Activated CD4-positive, alpha-beta T cell treated with anti-CD3 and anti-CD28 coated beads, Interleukin-2, amount 10 ng/mL, durations not matched to agents 24 days and 14 days (primary cell): ENCODE measurements at regions of chr16 and their contacts with region 1.

Region 1: GRCh38 chr16:30650369-30651123 is at the start of gene PRR14:
- DNase-seq: peak; percentile 99
- H3K4me3 Mint-ChIP-seq: peak within 1 kb of the TSS; percentile 95
- H3K27ac Mint-ChIP-seq: peak within 1 kb of the TSS; percentile 92
- H3K4me1 Mint-ChIP-seq: peaks cover 28% of the 10 kb centered on the region
- H3K27me3 Mint-ChIP-seq: peaks cover 2% of the 10 kb centered on the region
- total RNA-seq, gene PRR14: 82.2 and 86.7 TPM in 2 replicates

Region 2: DNA sequence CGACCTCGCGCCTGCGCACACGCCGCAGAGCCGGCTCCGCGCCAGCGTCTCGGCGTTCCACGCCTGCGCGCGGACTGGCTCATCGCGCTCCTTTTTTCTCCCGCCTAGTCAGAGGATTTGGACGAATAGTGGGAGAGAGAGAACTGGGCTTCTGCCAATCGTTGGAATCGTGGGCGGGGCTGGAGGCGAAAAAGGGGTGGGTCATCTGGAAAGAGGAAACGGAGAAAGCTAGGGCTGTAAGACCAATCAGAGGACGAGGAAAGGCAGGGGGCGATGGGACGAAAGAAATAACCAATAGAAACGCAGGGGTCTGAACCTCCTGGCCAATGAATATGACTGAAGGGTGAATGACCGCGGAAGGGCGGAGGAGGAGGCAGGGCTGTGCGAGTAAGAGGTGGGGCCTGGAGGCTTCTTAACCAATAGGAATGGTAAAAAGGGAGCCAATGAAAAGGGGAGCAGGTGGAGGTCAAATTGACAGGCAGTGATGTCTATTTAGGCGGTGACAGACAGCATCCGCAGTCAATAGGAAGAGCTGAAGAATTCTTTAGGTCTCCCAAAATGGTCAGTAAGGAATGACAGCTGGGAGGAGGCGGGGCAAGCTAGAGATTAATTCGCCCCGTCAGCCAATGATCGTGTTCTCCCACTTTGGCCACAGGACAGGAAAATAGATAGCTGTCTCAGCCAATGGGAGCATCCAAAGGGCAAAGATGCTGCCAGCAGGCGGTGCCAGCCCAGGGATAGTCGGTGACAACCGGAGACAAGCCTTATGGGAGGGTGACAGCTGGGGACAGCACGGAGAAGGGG is 279.9 kb before region 1 on chr16 and contains the start of gene TBC1D10B:
- intact Hi-C with region 1: loop called (anchors 2 kb)
- DNase-seq: peak; percentile 100
- H3K4me3 Mint-ChIP-seq: peak within 1 kb of the TSS; percentile 90
- H3K27ac Mint-ChIP-seq: peak within 1 kb of the TSS; percentile 94
- H3K4me1 Mint-ChIP-seq: peaks cover 42% of the 10 kb centered on the region
- H3K27me3 Mint-ChIP-seq: peaks cover 4% of the 10 kb centered on the region
- total RNA-seq, gene TBC1D10B: 68.9 TPM in 2 replicates

Region 3: GRCh38 chr16:30378236-30379204 is 272.0 kb before region 1 on chr16:
- intact Hi-C with region 1: loop called (anchors 2 kb)
- DNase-seq: peak; percentile 99
- H3K4me3 Mint-ChIP-seq: peak overlapping the region; percentile 99
- H3K27ac Mint-ChIP-seq: peak overlapping the region; percentile 100
- H3K4me1 Mint-ChIP-seq: peaks cover 43% of the 10 kb centered on the region
- H3K27me3 Mint-ChIP-seq: no peaks in the 10 kb centered on the region

Region 4: DNA sequence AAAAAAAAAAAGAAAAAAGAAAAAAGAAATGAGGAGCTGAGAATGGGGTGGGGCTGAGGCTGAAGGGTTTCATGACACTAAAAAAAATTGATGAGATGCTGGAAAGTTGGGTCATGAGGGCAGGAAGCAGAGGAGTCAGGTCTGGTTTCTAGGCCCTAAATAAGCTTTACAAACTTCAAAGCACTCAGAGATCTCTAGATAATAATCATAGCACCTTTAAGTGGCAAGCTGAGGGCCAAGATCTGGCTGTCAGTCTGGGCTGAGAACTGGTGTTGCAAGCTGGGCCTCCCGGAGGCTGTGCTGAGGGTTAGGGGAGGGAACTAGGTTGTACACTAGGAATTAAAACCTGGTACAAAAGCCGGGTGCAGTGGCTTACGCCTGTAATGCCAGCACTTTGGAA is 98.8 kb before region 1 on chr16:
- intact Hi-C with region 1: no loop called
- DNase-seq: peak; percentile 91
- H3K4me3 Mint-ChIP-seq: peak overlapping the region; percentile 77
- H3K27ac Mint-ChIP-seq: peak overlapping the region; percentile 92
- H3K4me1 Mint-ChIP-seq: peaks cover 51% of the 10 kb centered on the region
- H3K27me3 Mint-ChIP-seq: no peaks in the 10 kb centered on the region

Region 5: DNA sequence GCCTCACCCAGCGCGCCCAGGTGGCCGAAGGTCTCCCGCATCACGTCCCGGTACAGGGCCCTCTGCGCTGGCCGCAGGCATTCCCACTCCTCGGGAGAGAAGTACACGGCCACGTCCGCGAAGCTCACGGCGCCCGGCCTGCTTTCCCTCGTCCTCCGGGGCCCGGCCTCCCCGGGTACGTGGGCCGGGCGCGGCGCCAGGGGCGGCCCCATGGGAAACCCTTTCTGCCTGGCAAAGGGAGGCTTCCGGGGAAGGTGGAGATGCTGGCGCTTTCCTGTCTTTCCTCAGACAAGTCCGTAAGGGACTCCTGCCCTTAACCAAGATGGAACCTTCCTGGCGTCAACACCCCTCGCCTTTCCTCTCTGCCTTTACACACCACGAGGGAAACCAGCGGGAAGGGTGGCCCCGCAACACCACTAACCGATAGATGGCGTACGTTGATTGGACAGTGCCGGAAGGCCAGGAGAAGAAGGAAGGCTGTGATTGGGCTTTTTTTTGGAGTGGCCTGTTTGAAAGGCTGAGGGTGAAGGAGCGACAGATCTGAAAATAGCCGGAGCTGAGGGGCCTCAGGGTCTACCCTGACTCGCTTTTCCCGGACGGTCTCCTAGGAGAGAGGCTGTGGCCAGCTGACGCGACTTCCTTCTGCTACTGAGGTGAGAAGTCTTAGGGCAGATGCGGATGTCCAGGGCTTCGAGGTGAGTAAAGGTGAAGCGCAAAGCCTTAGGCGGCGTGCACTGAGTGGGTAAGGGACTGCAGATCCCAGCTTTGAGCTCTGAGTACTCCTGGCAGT is 65.0 kb before region 1 on chr16 and contains the start of gene ZNF785:
- intact Hi-C with region 1: loop called (anchors 2 kb)
- DNase-seq: peak; percentile 98
- H3K4me3 Mint-ChIP-seq: peak within 1 kb of the TSS; percentile 90
- H3K27ac Mint-ChIP-seq: peak within 1 kb of the TSS; percentile 91
- H3K4me1 Mint-ChIP-seq: peaks cover 25% of the 10 kb centered on the region
- H3K27me3 Mint-ChIP-seq: no peaks in the 10 kb centered on the region
- total RNA-seq, gene ZNF785: 17.1 and 17.8 TPM in 2 replicates

Region 6: DNA sequence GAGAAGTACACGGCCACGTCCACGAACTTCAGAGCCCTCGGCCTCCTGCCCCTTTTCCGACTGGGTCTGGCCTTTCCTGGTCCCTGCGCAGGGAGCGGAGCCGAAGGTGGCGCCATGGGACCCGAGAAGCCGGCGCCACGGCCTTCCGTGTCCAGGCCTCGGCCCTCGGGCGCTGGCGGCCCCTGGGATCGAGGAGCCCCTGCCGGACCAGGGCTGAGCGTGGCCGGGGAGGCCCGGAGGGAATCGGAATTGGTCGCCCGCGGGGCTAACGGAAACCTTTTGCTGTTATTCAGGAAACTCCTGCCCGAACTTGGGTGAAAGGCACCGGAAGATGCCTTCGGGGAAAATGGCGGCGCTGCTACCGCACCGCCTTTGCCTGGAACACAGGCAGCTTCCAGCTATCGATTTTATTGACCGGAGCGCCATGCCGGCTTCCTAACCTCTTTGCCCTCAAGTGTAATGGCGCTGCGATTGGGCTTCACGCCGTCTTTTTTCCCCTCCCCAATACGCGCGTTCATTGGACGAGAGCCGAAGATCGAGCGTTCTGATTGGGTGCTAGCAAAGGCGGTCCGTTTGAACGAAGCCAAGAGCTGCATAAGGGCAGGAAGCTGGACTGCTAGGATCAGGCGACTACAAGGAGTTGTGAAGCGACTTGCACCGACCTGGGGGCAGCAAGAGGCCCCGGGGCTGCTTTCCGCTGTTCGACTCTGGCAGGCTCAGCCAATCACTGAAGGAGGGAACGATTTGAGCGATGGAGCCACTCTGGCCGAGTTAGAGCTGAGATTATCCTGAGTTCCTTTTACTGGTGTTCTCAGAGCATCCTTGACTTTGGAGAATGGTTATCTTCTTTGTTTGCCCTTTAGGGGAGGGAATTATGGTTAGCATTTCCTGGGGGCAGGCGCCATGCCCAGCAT is 40.4 kb before region 1 on chr16 and contains the start of gene ZNF689:
- intact Hi-C with region 1: loop called (anchors 2 kb)
- DNase-seq: peak; percentile 99
- H3K4me3 Mint-ChIP-seq: peak within 1 kb of the TSS; percentile 94
- H3K27ac Mint-ChIP-seq: peak within 1 kb of the TSS; percentile 97
- H3K4me1 Mint-ChIP-seq: peaks cover 24% of the 10 kb centered on the region
- H3K27me3 Mint-ChIP-seq: no peaks in the 10 kb centered on the region
- total RNA-seq, gene ZNF689: 14.0 and 14.6 TPM in 2 replicates

Region 7: GRCh38 chr16:30628627-30629540 is 21.7 kb before region 1 on chr16:
- intact Hi-C with region 1: loop called (anchors 1 kb)
- DNase-seq: peak; percentile 96
- H3K4me3 Mint-ChIP-seq: peak overlapping the region; percentile 69
- H3K27ac Mint-ChIP-seq: peak overlapping the region; percentile 84
- H3K4me1 Mint-ChIP-seq: peaks cover 9% of the 10 kb centered on the region
- H3K27me3 Mint-ChIP-seq: no peaks in the 10 kb centered on the region

Region 8: GRCh38 chr16:30698139-30698815 is 47.7 kb after region 1 on chr16:
- intact Hi-C with region 1: loop called (anchors 1 kb)
- DNase-seq: peak; percentile 100
- H3K4me3 Mint-ChIP-seq: peak overlapping the region; percentile 97
- H3K27ac Mint-ChIP-seq: peak overlapping the region; percentile 100
- H3K4me1 Mint-ChIP-seq: peaks cover 34% of the 10 kb centered on the region
- H3K27me3 Mint-ChIP-seq: no peaks in the 10 kb centered on the region